Natural killer cell (primary cell): ENCODE measurements at regions of chr22 and their contacts with region 1.

Region 1: DNA sequence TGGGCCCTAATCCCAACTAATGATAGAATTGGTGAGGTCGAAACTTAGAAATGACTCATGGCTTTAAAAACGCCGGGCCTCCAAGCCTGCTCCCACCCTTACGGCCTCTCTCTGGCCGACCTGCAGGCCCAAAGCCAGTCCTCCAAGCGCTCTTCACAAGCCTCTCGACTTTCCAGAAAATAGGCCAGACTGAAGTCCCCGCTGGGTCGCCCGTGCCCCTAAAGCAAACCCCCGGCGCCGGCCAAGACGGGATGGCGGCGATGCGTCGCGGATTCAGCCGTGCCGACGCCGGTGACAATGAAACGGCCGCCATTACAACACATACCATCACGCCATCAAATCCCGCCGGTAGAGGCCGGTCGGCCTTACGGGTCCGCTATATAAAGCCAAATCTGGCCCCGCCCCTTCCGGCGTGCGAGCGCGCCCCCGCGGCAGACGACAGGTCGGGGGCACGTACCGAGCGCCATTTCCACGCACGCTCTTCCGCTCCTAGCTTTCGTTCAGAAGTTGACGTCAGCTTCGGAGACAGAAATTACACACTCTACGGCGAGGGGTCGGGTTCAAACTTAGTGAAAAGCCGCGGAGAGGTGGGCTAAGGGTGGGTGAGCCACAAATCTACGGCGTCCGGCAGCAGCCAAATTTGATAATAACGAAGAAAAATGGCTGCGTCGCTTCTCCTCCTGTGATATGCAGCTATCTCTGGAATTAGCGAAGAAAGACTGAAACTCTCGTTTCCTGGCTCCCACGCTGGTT is at the start of gene RPL3:
- DNase-seq: peak; percentile 98 to 99
- ATAC-seq: peak; percentile 77 to 92 (median 81)
- H3K4me3 ChIP-seq: peak within 1 kb of the TSS; percentile 72
- H3K4me3 Mint-ChIP-seq: peak within 1 kb of the TSS; percentile 99
- H3K27ac ChIP-seq: peak within 1 kb of the TSS; percentile 97
- H3K27ac Mint-ChIP-seq: peak within 1 kb of the TSS; percentile 99 to 100
- H3K4me1 ChIP-seq: peaks cover 54% of the 10 kb centered on the region
- H3K4me1 Mint-ChIP-seq: peaks cover 34 to 63% of the 10 kb centered on the region in 2 donors
- H3K27me3 ChIP-seq: no peaks in the 10 kb centered on the region
- H3K27me3 Mint-ChIP-seq: no peaks in the 10 kb centered on the region
- CTCF ChIP-seq: no peak
- total RNA-seq, gene RPL3: 1,534 to 1,757 (median 1,614) TPM

Region 2: GRCh38 chr22:38866403-38867123 is 452.9 kb before region 1 on chr22:
- intact Hi-C with region 1: loop called (anchors 2 kb)
- DNase-seq: no peak
- ATAC-seq: no peak
- H3K4me3 ChIP-seq: no peak overlapping the region
- H3K4me3 Mint-ChIP-seq: no peak overlapping the region
- H3K27ac ChIP-seq: no peak overlapping the region
- H3K27ac Mint-ChIP-seq: no peak overlapping the region
- H3K4me1 ChIP-seq: peaks cover 34% of the 10 kb centered on the region
- H3K4me1 Mint-ChIP-seq: peaks cover 22 to 42% of the 10 kb centered on the region in 2 donors
- H3K27me3 ChIP-seq: no peaks in the 10 kb centered on the region
- H3K27me3 Mint-ChIP-seq: no peaks in the 10 kb centered on the region
- CTCF ChIP-seq: no peak

Region 3: DNA sequence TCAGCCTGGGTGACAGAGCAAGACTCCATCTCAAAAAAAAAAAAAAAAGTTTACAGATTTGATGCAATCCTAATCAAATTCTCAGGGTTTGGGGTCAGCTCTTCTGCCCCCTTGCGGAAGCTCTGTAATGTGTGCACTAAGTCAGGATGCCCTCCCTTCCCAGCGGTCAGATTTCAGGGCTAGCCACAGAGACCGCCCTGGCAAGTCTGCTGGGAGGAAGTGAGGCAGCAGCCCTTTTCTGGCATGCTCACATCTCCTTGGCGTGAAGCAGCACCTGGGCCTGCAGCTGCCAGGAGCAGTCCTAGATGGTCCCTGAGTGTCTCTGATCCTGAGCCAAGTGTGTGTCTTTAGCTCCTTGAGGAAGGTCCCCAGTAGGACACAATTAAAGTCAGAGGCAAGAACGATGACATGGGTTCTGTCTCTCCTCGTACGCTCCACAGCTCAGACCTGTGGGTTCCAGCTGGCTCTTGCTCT is 316.2 kb before region 1 on chr22:
- intact Hi-C with region 1: loop called (anchors 5 kb)
- DNase-seq: peak; percentile 70 to 90
- ATAC-seq: peak; percentile 87 to 95 (median 95)
- H3K4me3 ChIP-seq: no peak overlapping the region
- H3K4me3 Mint-ChIP-seq: peak overlapping the region; percentile 32
- H3K27ac ChIP-seq: peak overlapping the region; percentile 11
- H3K27ac Mint-ChIP-seq: peak overlapping the region in 1 of 2 donors; percentile 59
- H3K4me1 ChIP-seq: peaks cover 14% of the 10 kb centered on the region
- H3K4me1 Mint-ChIP-seq: peaks cover 9 to 16% of the 10 kb centered on the region in 2 donors
- H3K27me3 ChIP-seq: no peaks in the 10 kb centered on the region
- H3K27me3 Mint-ChIP-seq: peaks cover 5% of the 10 kb centered on the region in 2 donors
- CTCF ChIP-seq: peak; percentile 79

Region 4: DNA sequence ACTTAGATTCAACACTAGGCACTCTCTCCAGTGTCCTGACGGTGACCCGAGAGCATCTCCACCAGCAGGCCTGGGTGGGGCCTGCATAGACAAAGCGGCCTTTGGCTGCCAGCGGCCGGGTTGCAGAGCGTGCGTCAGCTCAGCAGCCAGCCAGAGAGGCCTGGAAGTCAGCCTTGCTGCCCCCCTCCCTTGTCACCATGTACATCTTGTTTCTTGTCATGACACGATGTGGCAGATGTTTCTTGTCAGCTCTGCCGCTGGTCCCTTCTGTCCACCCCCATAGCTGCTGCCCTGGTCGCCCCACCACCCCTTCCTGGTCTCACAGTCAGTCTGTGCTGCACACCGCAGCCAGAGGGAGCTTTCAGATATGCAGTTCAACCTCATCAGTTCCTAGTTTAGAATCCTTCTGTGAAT is 133.8 kb before region 1 on chr22:
- intact Hi-C with region 1: no loop called
- DNase-seq: no peak
- ATAC-seq: no peak
- H3K4me3 ChIP-seq: no peak overlapping the region
- H3K4me3 Mint-ChIP-seq: no peak overlapping the region
- H3K27ac ChIP-seq: no peak overlapping the region
- H3K27ac Mint-ChIP-seq: no peak overlapping the region
- H3K4me1 ChIP-seq: peaks cover 7% of the 10 kb centered on the region
- H3K4me1 Mint-ChIP-seq: peaks cover 12 to 17% of the 10 kb centered on the region in 2 donors
- H3K27me3 ChIP-seq: no peaks in the 10 kb centered on the region
- H3K27me3 Mint-ChIP-seq: peaks cover 0 to 2% of the 10 kb centered on the region in 2 donors
- CTCF ChIP-seq: no peak

Region 5: DNA sequence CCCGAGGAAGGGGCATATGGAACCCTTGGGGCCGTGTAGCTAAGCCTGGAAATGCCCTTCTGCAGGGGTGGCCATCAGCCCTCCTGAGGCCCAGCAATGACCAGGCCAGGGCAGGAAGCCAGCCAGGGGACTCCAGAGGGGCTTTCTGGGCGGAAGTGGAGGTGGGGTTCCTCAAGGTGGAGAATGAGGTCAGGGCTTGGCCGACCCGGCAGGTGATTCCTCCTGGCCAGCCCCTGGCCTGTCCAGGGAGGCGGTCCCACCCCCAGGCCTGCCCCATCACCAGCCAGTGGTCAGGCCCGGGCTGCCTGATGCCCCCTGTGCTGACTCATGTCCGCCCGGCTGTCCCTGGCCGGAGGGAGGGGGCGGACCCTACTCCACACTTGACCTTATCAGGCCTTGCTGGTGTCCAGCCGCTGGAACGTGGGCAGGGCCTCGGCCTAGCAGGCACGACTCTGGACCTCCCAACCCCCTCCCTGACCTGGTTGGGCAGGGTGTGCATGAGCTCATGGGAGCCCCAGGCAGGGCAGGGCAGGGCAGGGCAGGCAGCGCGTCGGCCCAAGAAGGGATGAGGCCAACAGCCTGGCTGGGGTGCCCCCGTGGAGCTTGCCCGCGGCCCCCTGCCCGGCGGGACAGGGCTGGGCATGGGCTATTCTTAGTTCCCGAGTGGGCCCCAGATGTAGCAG is 36.0 kb before region 1 on chr22:
- intact Hi-C with region 1: no loop called
- DNase-seq: no peak
- ATAC-seq: no peak
- H3K4me3 ChIP-seq: no peak overlapping the region
- H3K4me3 Mint-ChIP-seq: no peak overlapping the region
- H3K27ac ChIP-seq: no peak overlapping the region
- H3K27ac Mint-ChIP-seq: no peak overlapping the region
- H3K4me1 ChIP-seq: peaks cover 37% of the 10 kb centered on the region
- H3K4me1 Mint-ChIP-seq: peaks cover 11 to 18% of the 10 kb centered on the region in 2 donors
- H3K27me3 ChIP-seq: no peaks in the 10 kb centered on the region
- H3K27me3 Mint-ChIP-seq: peaks cover 0 to 3% of the 10 kb centered on the region in 2 donors
- CTCF ChIP-seq: no peak